Ovary (tissue), 10 donors: ENCODE measurements at regions of chr1 and their contacts with region 1.

Region 1: GRCh38 chr1:236603991-236604904 is at the start of gene HEATR1:
- DNase-seq: peak; percentile 89 to 93 (median 91)
- H3K4me3 ChIP-seq: peak within 1 kb of the TSS; percentile 59
- H3K27ac ChIP-seq: peak within 1 kb of the TSS in 1 of 2 donors; percentile 41
- H3K4me1 ChIP-seq: no peaks in the 10 kb centered on the region
- H3K27me3 ChIP-seq: no peaks in the 10 kb centered on the region
- CTCF ChIP-seq: no peak
- EP300 ChIP-seq: no peak
- POLR2A ChIP-seq: peak; percentile 41
- total RNA-seq, gene HEATR1: 10.7 to 51.6 (median 28.0) TPM

Region 2: DNA sequence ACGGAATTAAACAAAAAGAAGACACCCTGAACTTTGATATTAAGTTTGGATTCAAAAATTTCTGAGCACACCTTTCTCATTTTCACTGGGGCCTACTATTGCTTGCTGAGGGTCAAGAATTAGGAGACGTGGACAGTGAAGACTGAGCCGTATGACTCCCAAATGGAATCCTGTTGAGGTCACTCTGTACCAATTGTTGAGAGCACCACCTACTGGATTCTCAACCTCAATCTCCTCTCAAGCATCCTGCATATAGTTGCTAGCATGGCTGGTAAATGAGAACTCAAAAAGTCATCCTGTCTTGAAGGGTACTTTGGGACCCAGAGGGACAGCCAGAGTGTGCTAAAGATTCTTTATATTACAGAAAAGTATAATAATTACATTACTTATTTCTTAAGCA is 170.7 kb after region 1 on chr1:
- intact Hi-C with region 1: loop called in 1 of 4 experiments (anchors 10 kb)
- DNase-seq: no peak
- H3K4me3 ChIP-seq: no peak overlapping the region
- H3K27ac ChIP-seq: no peak overlapping the region
- H3K4me1 ChIP-seq: no peaks in the 10 kb centered on the region
- H3K27me3 ChIP-seq: no peaks in the 10 kb centered on the region
- CTCF ChIP-seq: no peak
- EP300 ChIP-seq: no peak
- POLR2A ChIP-seq: no peak

Region 3: DNA sequence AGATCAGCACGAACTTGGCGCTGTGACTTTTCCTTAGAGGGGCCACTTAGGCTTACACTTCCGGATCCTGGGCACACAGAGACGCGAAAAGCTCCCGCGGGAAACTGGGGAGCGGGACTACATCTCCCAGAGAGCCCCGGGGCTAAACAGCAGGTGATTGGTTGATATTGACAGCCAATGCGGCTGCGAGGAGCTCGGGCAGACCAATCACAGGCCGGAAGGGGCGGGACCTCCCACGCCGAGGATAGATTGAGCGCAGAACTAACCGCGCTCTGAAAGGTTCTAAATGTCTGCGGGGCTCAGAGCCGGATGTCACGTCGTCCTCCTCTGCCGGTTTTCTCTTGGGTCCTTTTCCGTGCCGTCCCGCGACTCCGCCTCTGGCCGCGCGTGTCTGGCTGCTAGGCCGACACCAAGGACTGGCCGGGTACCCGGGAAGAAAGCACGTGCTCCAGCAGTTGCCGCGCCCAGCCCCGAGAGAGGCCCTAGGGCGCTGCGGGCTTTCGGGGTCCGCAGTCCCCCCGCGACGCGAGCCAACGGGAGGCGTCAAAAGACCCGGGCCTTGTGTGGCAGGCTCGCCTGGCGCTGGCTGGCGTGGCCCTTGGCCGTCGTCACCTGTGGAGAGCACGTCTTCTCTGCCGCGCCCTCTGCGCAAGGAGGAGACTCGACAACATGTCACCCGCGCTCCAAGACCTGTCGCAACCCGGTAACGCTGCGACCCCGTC is 190.9 kb after region 1 on chr1 and contains the start of gene MTR:
- intact Hi-C with region 1: loop called in 1 of 4 experiments (anchors 10 kb)
- DNase-seq: peak; percentile 97 to 98 (median 97)
- H3K4me3 ChIP-seq: peak within 1 kb of the TSS; percentile 78
- H3K27ac ChIP-seq: peak within 1 kb of the TSS; percentile 78 to 89
- H3K4me1 ChIP-seq: peaks cover 2% of the 10 kb centered on the region
- H3K27me3 ChIP-seq: no peaks in the 10 kb centered on the region
- CTCF ChIP-seq: no peak
- EP300 ChIP-seq: no peak
- POLR2A ChIP-seq: peak; percentile 68
- total RNA-seq, gene MTR: 26.1 to 60.8 (median 51.9) TPM